ENCODE measurements at regions of chr1 and their contacts with region 1.

Region 1: DNA sequence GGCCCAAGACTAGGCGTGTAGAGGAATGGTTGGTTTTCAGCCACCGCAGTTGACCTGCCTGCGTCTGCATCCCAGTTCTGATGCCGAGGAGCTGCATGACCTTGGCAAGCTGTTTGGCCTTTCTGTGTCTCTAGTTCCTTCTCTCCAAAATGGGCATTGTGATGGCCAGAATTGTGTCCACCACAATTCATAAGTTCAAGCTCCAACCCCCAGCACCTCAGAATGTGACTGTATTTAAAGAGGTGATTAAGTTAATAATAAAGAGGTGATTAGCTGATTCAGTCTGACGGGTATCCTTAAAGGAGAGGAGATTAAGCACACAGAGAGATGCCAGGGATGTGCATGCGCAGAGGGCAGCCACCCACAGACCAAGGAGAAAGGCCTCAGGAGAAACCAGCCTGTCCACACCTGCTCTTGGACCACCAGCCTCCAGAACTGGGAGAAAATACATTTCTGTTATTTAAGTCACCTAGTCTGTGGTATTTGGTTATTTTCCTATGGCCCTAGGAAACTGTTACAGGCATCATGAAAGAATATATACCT is 28.5 kb downstream of the MAB21L3 start:
- DNase-seq: no peak
- H3K4me3 ChIP-seq: no peak overlapping the region
- H3K4me3 Mint-ChIP-seq: no peak overlapping the region
- H3K27ac ChIP-seq: no peak overlapping the region
- H3K27ac Mint-ChIP-seq: no peak overlapping the region
- H3K4me1 ChIP-seq: no peaks in the 10 kb centered on the region
- H3K4me1 Mint-ChIP-seq: peaks cover 5 to 8% (median 6%) of the 10 kb centered on the region in 4 donors
- H3K27me3 ChIP-seq: no peaks in the 10 kb centered on the region
- H3K27me3 Mint-ChIP-seq: peaks cover 4 to 7% of the 10 kb centered on the region in 2 donors

Region 2: DNA sequence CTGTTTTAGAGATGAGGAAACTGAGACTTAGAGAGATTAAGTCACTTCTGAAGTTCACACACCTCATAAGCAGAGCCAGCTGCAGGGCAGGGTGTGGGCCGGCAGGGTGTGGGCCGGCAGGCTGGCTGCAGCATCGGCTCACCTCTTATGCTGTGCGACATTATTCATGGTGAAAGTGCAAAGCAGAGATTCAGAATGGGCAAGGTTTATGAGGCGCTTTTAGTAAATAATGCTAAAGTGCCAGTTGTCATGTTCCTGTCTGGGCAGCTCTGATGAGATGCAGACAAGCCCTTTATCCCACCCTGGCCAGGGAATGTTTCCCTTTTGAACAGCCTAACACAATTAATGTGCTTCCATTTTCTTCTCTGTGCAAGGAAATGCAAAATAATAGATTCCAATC is 13.9 kb before region 1 on chr1:
- CTCF ChIA-PET with region 1: interaction called, 10 read pairs
- POLR2A ChIA-PET with region 1: interaction called, 3 read pairs
- intact Hi-C with region 1: no loop called
- DNase-seq: no peak
- H3K4me3 ChIP-seq: no peak overlapping the region
- H3K4me3 Mint-ChIP-seq: no peak overlapping the region
- H3K27ac ChIP-seq: no peak overlapping the region
- H3K27ac Mint-ChIP-seq: no peak overlapping the region
- H3K4me1 ChIP-seq: peaks cover 28% of the 10 kb centered on the region
- H3K4me1 Mint-ChIP-seq: peaks cover 19 to 37% (median 27%) of the 10 kb centered on the region in 4 donors
- H3K27me3 ChIP-seq: no peaks in the 10 kb centered on the region
- H3K27me3 Mint-ChIP-seq: peaks cover 7 to 11% of the 10 kb centered on the region in 2 donors

Region 3: GRCh38 chr1:116168277-116169097 is 28.8 kb after region 1 on chr1:
- CTCF ChIA-PET with region 1: interaction called, 56 read pairs
- POLR2A ChIA-PET with region 1: interaction called, 4 read pairs
- intact Hi-C with region 1: loop called (anchors 1 kb)
- DNase-seq: peak; percentile 77 to 84 (median 83)
- H3K4me3 ChIP-seq: peak overlapping the region; percentile 13 to 71
- H3K4me3 Mint-ChIP-seq: peak overlapping the region; percentile 63 to 94 (median 88)
- H3K27ac ChIP-seq: peak overlapping the region; percentile 55
- H3K27ac Mint-ChIP-seq: peak overlapping the region; percentile 33 to 96 (median 90)
- H3K4me1 ChIP-seq: peaks cover 12% of the 10 kb centered on the region
- H3K4me1 Mint-ChIP-seq: peaks cover 12 to 22% (median 17%) of the 10 kb centered on the region in 4 donors
- H3K27me3 ChIP-seq: no peaks in the 10 kb centered on the region
- H3K27me3 Mint-ChIP-seq: peaks cover 0 to 1% of the 10 kb centered on the region in 2 donors

Region 4: DNA sequence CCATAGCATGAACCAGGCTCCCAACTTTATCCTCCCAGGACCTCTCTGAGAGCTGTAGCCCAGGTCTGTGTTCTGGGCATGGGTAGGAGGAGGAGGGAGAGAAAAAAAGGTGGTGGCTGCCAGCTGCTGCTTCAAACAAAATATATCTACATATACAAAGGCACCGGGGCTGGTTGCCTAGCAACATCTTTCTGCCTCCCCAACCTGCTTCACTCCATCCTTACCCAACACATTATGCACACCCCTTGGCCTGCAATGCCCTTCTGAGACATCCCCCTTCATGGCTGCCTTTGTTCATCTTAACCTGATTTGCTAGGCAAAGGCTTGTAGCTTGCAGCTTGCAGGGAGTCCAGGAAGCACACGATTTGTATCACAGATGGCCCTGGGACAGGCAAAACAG is 206.2 kb after region 1 on chr1:
- CTCF ChIA-PET with region 1: interaction called, 30 read pairs
- POLR2A ChIA-PET with region 1: no interaction called
- intact Hi-C with region 1: no loop called
- DNase-seq: peak; percentile 74 to 85 (median 83)
- H3K4me3 ChIP-seq: no peak overlapping the region
- H3K4me3 Mint-ChIP-seq: peak overlapping the region; percentile 22 to 74 (median 57)
- H3K27ac ChIP-seq: peak overlapping the region; percentile 48
- H3K27ac Mint-ChIP-seq: peak overlapping the region; percentile 74 to 97 (median 95)
- H3K4me1 ChIP-seq: peaks cover 64% of the 10 kb centered on the region
- H3K4me1 Mint-ChIP-seq: peaks cover 38 to 76% (median 56%) of the 10 kb centered on the region in 4 donors
- H3K27me3 ChIP-seq: no peaks in the 10 kb centered on the region
- H3K27me3 Mint-ChIP-seq: no peaks in the 10 kb centered on the region

Region 5: GRCh38 chr1:116498789-116499628 is 359.3 kb after region 1 on chr1:
- CTCF ChIA-PET with region 1: interaction called, 155 read pairs
- POLR2A ChIA-PET with region 1: interaction called, 14 read pairs
- intact Hi-C with region 1: loop called (anchors 1 kb)
- DNase-seq: peak; percentile 38 to 59 (median 54)
- H3K4me3 ChIP-seq: no peak overlapping the region
- H3K4me3 Mint-ChIP-seq: peak overlapping the region in 1 of 8 donors; percentile 27
- H3K27ac ChIP-seq: no peak overlapping the region
- H3K27ac Mint-ChIP-seq: peak overlapping the region in 6 of 7 donors; percentile 42 to 90 (median 74)
- H3K4me1 ChIP-seq: peaks cover 31% of the 10 kb centered on the region
- H3K4me1 Mint-ChIP-seq: peaks cover 26 to 60% (median 35%) of the 10 kb centered on the region in 4 donors
- H3K27me3 ChIP-seq: no peaks in the 10 kb centered on the region
- H3K27me3 Mint-ChIP-seq: no peaks in the 10 kb centered on the region

Region 6: GRCh38 chr1:116674011-116674531 is 534.4 kb after region 1 on chr1:
- CTCF ChIA-PET with region 1: interaction called, 5 read pairs
- POLR2A ChIA-PET with region 1: no interaction called
- intact Hi-C with region 1: loop called (anchors 5 kb)
- DNase-seq: no peak
- H3K4me3 ChIP-seq: no peak overlapping the region
- H3K4me3 Mint-ChIP-seq: no peak overlapping the region
- H3K27ac ChIP-seq: no peak overlapping the region
- H3K27ac Mint-ChIP-seq: peak overlapping the region in 1 of 7 donors; percentile 48
- H3K4me1 ChIP-seq: no peaks in the 10 kb centered on the region
- H3K4me1 Mint-ChIP-seq: peaks cover 0 to 4% (median 3%) of the 10 kb centered on the region in 4 donors
- H3K27me3 ChIP-seq: no peaks in the 10 kb centered on the region
- H3K27me3 Mint-ChIP-seq: peaks cover 10 to 14% of the 10 kb centered on the region in 2 donors

Measured in CD4-positive, alpha-beta memory T cell (primary cell).